Activated CD4-positive, alpha-beta T cell treated with anti-CD3 and anti-CD28 coated beads, Interleukin-2, amount 10 ng/mL, durations not matched to agents 24 days and 14 days (primary cell): ENCODE measurements at regions of chr2 and their contacts with region 1.

Region 1: GRCh38 chr2:118221666-118222594 is 133.7 kb downstream of the INSIG2 start:
- DNase-seq: peak; percentile 84
- H3K4me3 Mint-ChIP-seq: peak overlapping the region; percentile 10
- H3K27ac Mint-ChIP-seq: no peak overlapping the region
- H3K4me1 Mint-ChIP-seq: peaks cover 18% of the 10 kb centered on the region
- H3K27me3 Mint-ChIP-seq: peaks cover 71% of the 10 kb centered on the region

Region 2: DNA sequence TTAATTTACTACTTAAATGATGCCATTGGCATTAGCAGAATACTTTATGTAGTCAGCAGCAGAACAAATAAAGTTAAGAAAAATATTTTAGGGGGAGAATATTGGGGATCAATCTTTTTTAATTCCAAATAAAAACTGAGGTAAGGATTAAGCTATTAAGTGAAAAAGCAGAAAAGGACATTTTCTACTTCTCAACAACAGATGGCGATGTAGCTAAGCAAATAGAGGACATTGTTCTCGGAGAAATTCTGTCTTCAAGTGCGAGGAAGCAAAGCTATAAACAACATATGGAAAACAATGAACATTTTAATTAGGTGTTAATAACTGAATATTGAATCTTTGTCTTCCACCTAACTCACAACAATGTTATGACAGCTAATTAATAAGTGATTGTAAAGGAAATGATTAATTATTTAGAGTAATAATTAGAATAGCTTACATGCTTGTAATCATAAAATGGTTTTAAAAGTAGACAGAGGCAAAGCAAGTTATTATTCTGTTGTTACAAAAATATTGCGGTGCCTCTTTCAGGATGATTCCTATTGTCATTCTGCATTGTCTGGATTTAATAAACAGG is 175.2 kb before region 1 on chr2:
- intact Hi-C with region 1: loop called (anchors 1 kb)
- DNase-seq: no peak
- H3K4me3 Mint-ChIP-seq: no peak overlapping the region
- H3K27ac Mint-ChIP-seq: no peak overlapping the region
- H3K4me1 Mint-ChIP-seq: peaks cover 2% of the 10 kb centered on the region
- H3K27me3 Mint-ChIP-seq: peaks cover 41% of the 10 kb centered on the region

Region 3: DNA sequence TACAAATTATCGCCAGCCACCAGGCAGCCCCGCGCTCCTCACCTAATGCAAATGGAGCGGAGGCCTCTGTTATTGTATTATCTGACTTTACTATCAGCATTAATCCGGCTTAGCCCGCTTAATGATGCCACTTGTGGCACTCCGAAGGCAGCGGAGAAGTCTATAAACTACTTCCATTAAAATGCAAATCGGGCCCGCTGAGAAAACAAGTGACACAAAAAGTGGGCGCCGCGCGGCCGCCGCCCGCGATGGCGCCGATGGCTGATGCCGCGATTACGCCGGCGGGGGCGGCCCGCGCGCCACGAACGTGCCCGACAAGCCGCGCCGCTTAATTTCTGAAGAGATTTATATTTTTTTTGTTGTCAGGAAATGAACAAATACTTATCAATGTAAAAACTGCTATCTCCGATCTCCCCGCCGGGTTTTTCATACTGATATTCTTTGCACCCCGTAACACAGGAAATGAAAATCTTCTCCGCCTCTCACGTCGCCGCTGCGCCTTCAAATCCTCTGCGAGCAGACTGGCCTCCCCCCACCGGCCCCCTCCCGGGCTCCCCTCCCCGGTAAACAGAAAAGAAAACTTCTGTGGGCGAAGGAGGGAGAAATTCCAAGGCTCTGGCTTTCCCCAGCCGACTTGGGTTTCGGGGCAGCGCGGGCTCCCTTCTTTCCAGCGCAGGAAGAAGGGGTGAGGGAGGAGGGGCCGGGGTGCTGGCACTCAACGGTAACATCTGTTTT is 88.2 kb after region 1 on chr2:
- intact Hi-C with region 1: loop called (anchors 1 kb)
- DNase-seq: peak; percentile 90
- H3K4me3 Mint-ChIP-seq: peak overlapping the region; percentile 84
- H3K27ac Mint-ChIP-seq: peak overlapping the region; percentile 93
- H3K4me1 Mint-ChIP-seq: peaks cover 5% of the 10 kb centered on the region
- H3K27me3 Mint-ChIP-seq: peaks cover 17% of the 10 kb centered on the region

Region 4: GRCh38 chr2:119174216-119175037 is 952.5 kb after region 1 on chr2:
- intact Hi-C with region 1: loop called (anchors 2 kb)
- DNase-seq: peak; percentile 82
- H3K4me3 Mint-ChIP-seq: no peak overlapping the region
- H3K27ac Mint-ChIP-seq: no peak overlapping the region
- H3K4me1 Mint-ChIP-seq: no peaks in the 10 kb centered on the region
- H3K27me3 Mint-ChIP-seq: no peaks in the 10 kb centered on the region